ENCODE measurements at regions of chr1 and their contacts with region 1.

Region 1: GRCh38 chr1:24930204-24931145 is at the start of gene RUNX3:
- DNase-seq: peak; percentile 94
- ATAC-seq: peak; percentile 73
- H3K4me3 Mint-ChIP-seq: peak within 1 kb of the TSS; percentile 80
- H3K27ac Mint-ChIP-seq: peak within 1 kb of the TSS; percentile 90
- H3K4me1 Mint-ChIP-seq: peaks cover 72% of the 10 kb centered on the region
- H3K27me3 Mint-ChIP-seq: no peaks in the 10 kb centered on the region
- total RNA-seq, gene RUNX3: 224 to 246 TPM

Region 2: DNA sequence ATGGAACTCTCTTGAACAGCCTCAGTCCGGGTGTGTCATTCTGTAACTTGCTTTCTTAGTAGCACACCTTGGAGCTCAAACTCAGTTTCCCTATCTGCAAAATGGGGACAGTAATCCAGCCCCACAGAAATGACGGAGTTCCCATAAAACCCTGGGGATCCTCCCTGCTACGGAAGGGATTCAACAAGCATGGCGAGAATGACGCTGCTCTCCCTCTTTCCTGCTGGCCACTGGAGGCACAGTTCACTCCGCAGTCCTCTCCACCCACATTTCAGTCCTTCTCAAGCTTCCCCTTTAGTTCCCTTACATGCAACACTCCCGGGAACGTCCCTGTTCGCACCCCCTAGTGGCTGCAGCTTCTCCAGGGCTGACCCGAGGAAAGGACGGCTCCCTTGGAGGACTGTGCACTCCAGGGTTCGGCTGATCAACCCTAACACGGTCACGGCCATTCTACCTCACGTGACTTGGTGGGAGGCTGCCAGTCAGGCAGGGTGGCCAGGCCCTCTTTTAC is 21.0 kb before region 1 on chr1:
- CTCF ChIA-PET with region 1: interaction called, 86 read pairs
- DNase-seq: no peak
- ATAC-seq: no peak
- H3K4me3 Mint-ChIP-seq: no peak overlapping the region
- H3K27ac Mint-ChIP-seq: peak overlapping the region; percentile 96
- H3K4me1 Mint-ChIP-seq: peaks cover 64% of the 10 kb centered on the region
- H3K27me3 Mint-ChIP-seq: no peaks in the 10 kb centered on the region

Region 3: GRCh38 chr1:24941564-24941963 is 11.1 kb after region 1 on chr1:
- CTCF ChIA-PET with region 1: interaction called, 12 read pairs
- DNase-seq: no peak
- ATAC-seq: peak; percentile 44
- H3K4me3 Mint-ChIP-seq: no peak overlapping the region
- H3K27ac Mint-ChIP-seq: peak overlapping the region; percentile 20
- H3K4me1 Mint-ChIP-seq: peaks cover 90% of the 10 kb centered on the region
- H3K27me3 Mint-ChIP-seq: no peaks in the 10 kb centered on the region

Region 4: DNA sequence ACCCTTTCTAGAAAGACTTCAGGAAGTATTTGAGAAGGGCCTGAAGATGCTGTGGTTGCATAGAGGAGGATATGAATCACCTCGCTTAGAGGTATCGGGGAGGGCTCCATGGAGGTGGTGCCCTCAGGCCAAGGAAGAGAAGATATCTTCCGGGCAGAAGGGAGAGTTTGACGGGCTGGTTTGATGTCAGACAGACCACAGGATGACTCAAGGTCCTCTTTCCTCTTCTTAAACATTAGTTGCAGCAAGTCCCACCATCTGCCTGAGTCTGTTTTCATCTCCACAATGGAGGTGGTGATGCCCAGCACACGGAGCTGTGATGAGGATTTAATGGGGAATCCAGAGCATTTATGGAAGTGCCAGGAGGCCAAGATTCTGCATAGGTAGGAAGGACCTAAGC is 24.7 kb after region 1 on chr1:
- CTCF ChIA-PET with region 1: interaction called, 45 read pairs
- DNase-seq: peak; percentile 94
- ATAC-seq: peak; percentile 77
- H3K4me3 Mint-ChIP-seq: peak overlapping the region; percentile 77
- H3K27ac Mint-ChIP-seq: peak overlapping the region; percentile 92
- H3K4me1 Mint-ChIP-seq: peaks cover 93% of the 10 kb centered on the region
- H3K27me3 Mint-ChIP-seq: no peaks in the 10 kb centered on the region

Region 5: GRCh38 chr1:24964811-24965570 is 34.5 kb after region 1 on chr1:
- CTCF ChIA-PET with region 1: interaction called, 45 read pairs
- DNase-seq: peak; percentile 99
- ATAC-seq: peak; percentile 70
- H3K4me3 Mint-ChIP-seq: peak overlapping the region; percentile 89
- H3K27ac Mint-ChIP-seq: peak overlapping the region; percentile 92
- H3K4me1 Mint-ChIP-seq: peaks cover 56% of the 10 kb centered on the region
- H3K27me3 Mint-ChIP-seq: no peaks in the 10 kb centered on the region